Posterior cingulate gyrus (tissue), 11 donors: ENCODE measurements at regions of chr11 and their contacts with region 1.

Region 1: GRCh38 chr11:69642913-69643632 is 2.1 kb downstream of the CCND1 start:
- DNase-seq: peak; percentile 57 to 96 (median 72)

Region 2: GRCh38 chr11:69101115-69101791 is 541.8 kb before region 1 on chr11:
- intact Hi-C with region 1: loop called (anchors 1 kb)
- DNase-seq: peak; percentile 36 to 96 (median 70)

Region 3: GRCh38 chr11:69296890-69297786 is 345.9 kb before region 1 on chr11:
- intact Hi-C with region 1: loop called (anchors 5 kb)
- DNase-seq: peak in 9 of 10 donors; percentile 36 to 94 (median 48)

Region 4: DNA sequence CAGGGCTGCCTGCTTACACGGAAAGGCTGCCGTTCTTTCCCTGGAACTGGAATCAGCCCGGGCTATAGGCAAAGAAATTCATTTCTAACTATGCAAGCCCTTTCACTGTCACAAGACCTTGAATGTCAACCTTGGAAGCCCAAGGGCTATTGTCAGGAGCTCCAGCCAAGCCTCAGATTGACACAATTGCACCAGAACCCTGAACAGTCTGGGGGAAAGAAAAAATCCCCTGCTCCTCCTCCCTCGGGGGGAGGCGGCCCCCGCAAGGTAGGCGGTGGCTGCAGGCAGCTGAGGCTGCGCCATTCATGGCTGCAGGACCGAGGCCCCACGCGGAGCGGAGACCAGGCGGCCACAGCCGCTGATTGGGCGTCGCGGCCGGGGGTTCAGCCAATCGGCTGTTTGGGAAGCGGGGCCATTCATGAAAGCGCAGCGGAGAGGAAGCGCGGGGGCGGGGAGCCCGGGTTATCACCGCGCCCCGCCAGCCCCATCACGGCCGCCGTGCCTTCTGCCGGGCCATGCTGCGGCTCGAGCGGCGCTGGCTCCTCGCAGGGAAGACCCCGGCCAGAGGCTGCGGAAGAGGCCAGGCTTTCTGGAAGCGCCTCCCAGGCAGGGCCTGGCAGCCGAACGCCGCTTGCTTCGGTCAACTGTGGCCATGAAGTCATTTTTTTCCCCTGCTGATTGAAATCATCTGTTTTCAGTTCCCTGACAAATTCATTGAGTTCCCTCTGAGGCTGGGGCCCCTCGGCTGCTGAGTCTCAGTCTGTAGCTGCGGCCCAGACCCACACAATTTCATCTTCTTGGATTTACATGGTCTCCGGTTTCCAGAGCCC is 199.7 kb before region 1 on chr11:
- intact Hi-C with region 1: loop called (anchors 5 kb)
- DNase-seq: peak; percentile 75 to 99 (median 89)